ENCODE measurements at regions of chr19 and their contacts with region 1.

Region 1: DNA sequence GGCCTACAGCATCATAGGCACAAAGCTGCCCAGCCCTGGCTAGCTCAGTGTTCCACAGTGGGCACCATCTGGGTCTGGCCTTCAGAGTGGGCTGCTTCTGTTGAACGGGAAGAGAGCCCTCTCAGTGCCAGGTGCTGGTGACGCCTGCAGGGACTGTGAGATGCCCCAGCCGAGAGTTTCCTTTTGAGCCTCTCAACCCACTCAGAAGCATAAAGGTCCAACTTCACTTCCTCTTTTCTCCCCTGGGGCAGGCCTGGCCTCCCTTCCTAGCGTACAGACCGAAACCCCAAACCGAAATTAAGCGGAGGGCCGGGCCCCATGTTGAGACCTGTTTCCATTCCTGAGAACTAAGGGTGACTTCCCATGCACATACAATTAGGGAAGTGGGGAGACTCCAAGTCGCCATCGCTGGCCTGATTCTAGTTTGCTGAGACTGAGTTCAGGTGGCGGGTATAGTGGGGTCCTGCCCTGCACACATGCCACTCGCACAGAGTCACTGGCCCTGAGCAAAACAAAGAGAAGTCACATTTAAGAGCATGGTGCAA is 6.9 kb downstream of the RAB8A start:
- H3K4me3 Mint-ChIP-seq: peak overlapping the region; percentile 57
- H3K27ac Mint-ChIP-seq: peak overlapping the region; percentile 99
- H3K4me1 Mint-ChIP-seq: peaks cover 76% of the 10 kb centered on the region
- H3K27me3 Mint-ChIP-seq: no peaks in the 10 kb centered on the region

Region 2: GRCh38 chr19:16143399-16144245 is 25.1 kb after region 1 on chr19 and contains the start of gene HSH2D:
- intact Hi-C with region 1: loop called (anchors 1 kb)
- H3K4me3 Mint-ChIP-seq: peak within 1 kb of the TSS; percentile 89
- H3K27ac Mint-ChIP-seq: peak within 1 kb of the TSS; percentile 97
- H3K4me1 Mint-ChIP-seq: peaks cover 69% of the 10 kb centered on the region
- H3K27me3 Mint-ChIP-seq: no peaks in the 10 kb centered on the region

Measured in dendritic cell treated with granulocyte-macrophage colony-stimulating factor and Interleukin-4, amounts not matched to agents 40 ng/mL and 50 ng/mL, for 4 days (primary cell).